Head of caudate nucleus (tissue), 42 donors: ENCODE measurements at regions of chr4 and their contacts with region 1.

Region 1: DNA sequence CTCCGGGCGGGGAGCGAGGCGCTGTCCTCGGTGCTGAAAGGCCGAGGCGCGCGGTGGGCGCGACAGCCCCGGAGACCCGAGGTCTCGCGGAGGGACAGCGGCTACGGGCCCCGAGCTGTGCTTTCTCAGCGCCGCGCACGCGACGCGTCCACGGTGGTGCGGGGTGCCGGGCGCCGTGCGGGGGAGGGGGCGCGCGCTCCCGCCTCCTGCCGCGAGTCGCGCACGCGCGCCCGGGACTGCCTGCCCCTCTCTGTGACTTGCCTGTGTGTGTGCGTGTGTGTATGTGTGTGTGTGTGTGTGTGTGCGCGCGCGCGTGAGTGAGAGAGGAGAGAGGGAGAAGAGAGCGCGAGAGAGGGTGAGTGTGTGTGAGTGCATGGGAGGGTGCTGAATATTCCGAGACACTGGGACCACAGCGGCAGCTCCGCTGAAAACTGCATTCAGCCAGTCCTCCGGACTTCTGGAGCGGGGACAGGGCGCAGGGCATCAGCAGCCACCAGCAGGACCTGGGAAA is at the start of gene GRIA2:
- DNase-seq: peak; percentile 65 to 93 (median 84)

Region 2: DNA sequence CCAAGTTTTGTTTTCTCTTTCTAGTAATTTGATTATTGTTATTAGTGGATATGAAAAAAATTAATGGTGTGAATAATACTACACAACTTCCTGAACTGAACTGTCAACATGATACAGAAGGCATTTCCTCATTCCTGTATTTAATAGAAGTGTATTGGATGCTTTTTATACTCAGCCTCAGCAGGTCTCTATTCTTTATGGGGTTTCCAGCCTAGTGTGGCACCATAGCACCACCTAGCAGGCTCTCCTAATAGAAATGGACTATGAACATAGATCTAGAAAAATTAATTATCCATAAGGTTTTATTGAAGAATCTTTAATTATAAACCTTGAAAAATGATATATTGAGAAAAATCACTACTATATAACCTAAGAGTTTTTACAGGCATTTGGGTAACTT is 92.0 kb before region 1 on chr4:
- intact Hi-C with region 1: no loop called
- DNase-seq: peak in 22 of 42 donors; percentile 3 to 46 (median 18)

Region 3: GRCh38 chr4:157291071-157291470 is 70.6 kb after region 1 on chr4:
- intact Hi-C with region 1: loop called (anchors 10 kb)
- DNase-seq: peak in 1 of 42 donors; percentile 28

Region 4: DNA sequence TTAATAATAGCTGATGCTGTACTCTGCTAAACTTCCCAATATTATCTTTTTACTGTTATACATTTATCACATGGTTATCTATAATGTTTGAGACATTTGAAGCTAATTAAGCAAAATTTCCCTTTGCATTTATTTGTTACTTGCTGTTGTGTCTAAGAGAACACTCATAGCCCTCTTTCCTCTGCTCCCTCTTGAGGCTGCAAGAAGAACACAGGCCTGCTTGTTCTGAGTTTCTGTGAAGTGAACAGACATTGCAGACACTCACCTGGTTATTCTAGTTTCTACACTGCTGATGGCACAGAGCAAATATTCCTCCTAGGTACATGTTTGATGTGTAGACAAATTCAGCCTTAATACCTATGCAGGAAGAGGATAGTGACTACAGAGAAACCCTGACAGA is 584.6 kb after region 1 on chr4:
- intact Hi-C with region 1: loop called (anchors 10 kb)
- DNase-seq: peak in 9 of 42 donors; percentile 6 to 66 (median 27)

Region 5: GRCh38 chr4:157978680-157979361 is 758.4 kb after region 1 on chr4:
- intact Hi-C with region 1: loop called (anchors 2 kb)
- DNase-seq: peak; percentile 67 to 93 (median 82)